Naive thymus-derived CD4-positive, alpha-beta T cell (primary cell): ENCODE measurements at regions of chr17 and their contacts with region 1.

Region 1: DNA sequence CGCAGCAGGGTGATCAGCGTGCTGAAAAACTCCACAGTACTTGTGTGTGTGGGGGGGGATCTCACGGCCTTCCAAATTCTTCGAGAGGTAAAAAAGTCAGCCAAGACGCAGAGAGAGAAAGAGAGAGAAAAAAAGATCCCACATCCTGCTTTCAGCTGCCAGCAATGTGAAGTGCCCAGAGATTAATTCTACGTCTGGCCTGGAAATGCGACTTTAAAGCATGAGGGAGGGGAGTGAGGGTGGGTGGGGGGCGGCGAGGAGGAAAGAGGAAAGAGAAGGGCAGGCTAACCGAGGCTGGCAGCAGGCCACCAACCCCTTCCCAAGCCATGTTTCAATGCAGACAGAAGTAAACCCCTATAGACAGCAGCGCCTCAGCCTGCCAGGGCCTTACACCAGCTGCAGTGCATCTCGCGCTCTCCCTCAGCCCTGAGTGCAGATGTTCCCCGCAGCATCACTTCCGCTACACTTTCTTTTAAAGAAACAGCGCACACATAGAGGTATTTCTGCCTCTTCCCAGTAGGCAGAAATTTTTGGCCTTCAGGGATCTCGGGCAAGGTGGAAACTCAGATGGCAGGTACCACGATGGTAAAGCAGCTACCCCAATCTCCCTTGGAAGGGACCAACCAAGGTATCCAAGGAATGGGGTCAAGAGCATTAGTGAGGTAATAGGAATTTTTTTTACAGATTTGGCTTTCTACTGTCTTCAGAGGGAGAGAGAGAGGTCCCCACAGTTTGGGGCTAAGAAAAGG is 87.8 kb downstream of the SMG6 start:
- DNase-seq: peak; percentile 43 to 81 (median 77)
- ATAC-seq: peak; percentile 98
- H3K4me3 ChIP-seq: peak overlapping the region; percentile 40
- H3K4me3 Mint-ChIP-seq: peak overlapping the region; percentile 74 to 89 (median 80)
- H3K27ac ChIP-seq: peak overlapping the region; percentile 89
- H3K27ac Mint-ChIP-seq: peak overlapping the region; percentile 94 to 98 (median 97)
- H3K4me1 ChIP-seq: peaks cover 34 to 53% of the 10 kb centered on the region in 2 donors
- H3K4me1 Mint-ChIP-seq: peaks cover 27 to 70% (median 64%) of the 10 kb centered on the region in 7 donors
- H3K27me3 ChIP-seq: no peaks in the 10 kb centered on the region
- H3K27me3 Mint-ChIP-seq: no peaks in the 10 kb centered on the region

Region 2: GRCh38 chr17:2090804-2091534 is 124.8 kb before region 1 on chr17:
- CTCF ChIA-PET with region 1: no interaction called
- POLR2A ChIA-PET with region 1: no interaction called
- intact Hi-C with region 1: loop called (anchors 1 kb)
- DNase-seq: no peak
- ATAC-seq: no peak
- H3K4me3 ChIP-seq: no peak overlapping the region
- H3K4me3 Mint-ChIP-seq: peak overlapping the region; percentile 91 to 99 (median 96)
- H3K27ac ChIP-seq: peak overlapping the region; percentile 69
- H3K27ac Mint-ChIP-seq: peak overlapping the region; percentile 27 to 97 (median 95)
- H3K4me1 ChIP-seq: peaks cover 28 to 30% of the 10 kb centered on the region in 2 donors
- H3K4me1 Mint-ChIP-seq: peaks cover 28 to 76% (median 53%) of the 10 kb centered on the region in 7 donors
- H3K27me3 ChIP-seq: no peaks in the 10 kb centered on the region
- H3K27me3 Mint-ChIP-seq: no peaks in the 10 kb centered on the region

Region 3: DNA sequence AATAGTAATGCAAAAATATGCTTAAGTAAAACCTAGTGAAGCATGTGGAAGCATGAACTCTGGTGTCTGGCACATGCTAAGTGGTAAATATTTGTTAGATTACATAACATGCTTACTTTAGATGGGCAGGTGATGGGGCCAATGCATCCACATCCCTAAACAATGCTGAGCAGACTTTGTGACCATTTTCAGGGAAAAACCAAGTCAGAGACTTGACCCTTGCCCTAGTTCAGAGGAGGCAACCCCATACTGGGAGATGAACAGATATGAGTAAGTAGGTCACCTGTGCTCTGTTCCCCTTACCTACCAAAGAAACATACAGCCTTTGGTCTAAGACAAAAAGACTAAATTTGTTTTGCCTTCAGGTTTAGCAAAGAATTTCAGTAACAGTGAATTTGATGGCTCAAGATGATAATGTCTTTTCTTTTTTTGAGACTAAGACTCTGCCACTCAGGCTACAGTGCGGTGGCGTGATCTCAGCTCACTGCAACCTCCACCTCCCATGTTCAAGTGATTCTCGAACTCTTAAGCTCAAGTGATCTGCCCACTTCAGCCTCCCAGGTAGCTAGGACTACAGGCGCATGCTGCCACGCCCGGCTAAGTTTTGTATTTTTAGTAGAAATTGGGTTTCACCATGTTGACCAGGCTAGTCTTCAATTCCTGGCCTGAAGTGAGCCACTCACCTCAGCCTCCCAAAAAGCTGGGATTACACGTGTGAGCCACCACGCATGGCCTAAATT is 69.5 kb before region 1 on chr17:
- CTCF ChIA-PET with region 1: no interaction called
- POLR2A ChIA-PET with region 1: no interaction called
- intact Hi-C with region 1: no loop called
- DNase-seq: no peak
- ATAC-seq: no peak
- H3K4me3 ChIP-seq: no peak overlapping the region
- H3K4me3 Mint-ChIP-seq: no peak overlapping the region
- H3K27ac ChIP-seq: no peak overlapping the region
- H3K27ac Mint-ChIP-seq: peak overlapping the region in 2 of 9 donors; percentile 25 to 66
- H3K4me1 ChIP-seq: peaks cover 0 to 4% of the 10 kb centered on the region in 2 donors
- H3K4me1 Mint-ChIP-seq: peaks cover 0 to 14% (median 3%) of the 10 kb centered on the region in 7 donors
- H3K27me3 ChIP-seq: no peaks in the 10 kb centered on the region
- H3K27me3 Mint-ChIP-seq: no peaks in the 10 kb centered on the region

Region 4: DNA sequence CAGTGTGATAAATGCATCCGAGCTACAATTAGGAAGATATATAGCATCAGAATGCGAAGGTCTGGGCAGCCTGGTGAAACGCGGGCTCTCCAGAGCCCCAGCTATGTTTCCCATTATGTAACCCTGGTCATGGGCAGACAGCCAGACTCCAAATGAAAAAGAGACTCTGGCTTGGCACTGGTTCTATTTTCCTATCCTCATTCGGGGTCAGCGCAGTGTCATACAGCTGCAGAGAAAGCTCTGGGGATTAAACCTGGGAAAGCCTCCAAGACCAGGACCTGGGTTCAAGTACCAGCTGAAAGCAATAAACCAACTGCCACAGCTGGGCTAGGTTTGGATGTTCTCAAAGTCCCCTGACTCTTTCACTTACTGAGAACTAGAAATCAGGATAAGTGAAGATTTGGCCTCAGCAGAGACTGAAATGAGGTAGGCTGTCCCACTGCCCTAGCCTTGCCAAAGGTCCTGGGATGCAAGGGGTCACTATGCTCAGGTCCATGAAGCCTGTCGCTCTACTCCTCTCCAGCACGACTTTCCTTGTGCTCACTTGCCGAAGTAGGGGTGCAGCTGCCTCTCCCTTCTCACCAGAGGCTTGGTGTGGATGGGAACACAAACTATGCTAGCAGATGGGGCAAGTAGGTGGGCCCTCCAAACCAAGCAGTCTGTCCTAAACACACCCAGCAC is 36.0 kb before region 1 on chr17:
- CTCF ChIA-PET with region 1: no interaction called
- POLR2A ChIA-PET with region 1: no interaction called
- intact Hi-C with region 1: loop called in 1 of 2 experiments (anchors 5 kb)
- DNase-seq: no peak
- ATAC-seq: no peak
- H3K4me3 ChIP-seq: no peak overlapping the region
- H3K4me3 Mint-ChIP-seq: no peak overlapping the region
- H3K27ac ChIP-seq: no peak overlapping the region
- H3K27ac Mint-ChIP-seq: peak overlapping the region in 1 of 9 donors; percentile 88
- H3K4me1 ChIP-seq: no peaks in the 10 kb centered on the region
- H3K4me1 Mint-ChIP-seq: peaks cover 0 to 59% (median 10%) of the 10 kb centered on the region in 7 donors
- H3K27me3 ChIP-seq: no peaks in the 10 kb centered on the region
- H3K27me3 Mint-ChIP-seq: no peaks in the 10 kb centered on the region

Region 5: GRCh38 chr17:2192367-2193057 is 23.3 kb before region 1 on chr17:
- CTCF ChIA-PET with region 1: interaction called, 4 read pairs
- POLR2A ChIA-PET with region 1: interaction called, 5 read pairs
- intact Hi-C with region 1: loop called in 1 of 2 experiments (anchors 1 kb)
- DNase-seq: peak in 7 of 9 donors; percentile 22 to 41 (median 31)
- ATAC-seq: peak; percentile 90
- H3K4me3 ChIP-seq: no peak overlapping the region
- H3K4me3 Mint-ChIP-seq: peak overlapping the region; percentile 30 to 80 (median 58)
- H3K27ac ChIP-seq: peak overlapping the region; percentile 27
- H3K27ac Mint-ChIP-seq: peak overlapping the region in 8 of 9 donors; percentile 22 to 86 (median 82)
- H3K4me1 ChIP-seq: peaks cover 16 to 30% of the 10 kb centered on the region in 2 donors
- H3K4me1 Mint-ChIP-seq: peaks cover 34 to 87% (median 63%) of the 10 kb centered on the region in 7 donors
- H3K27me3 ChIP-seq: no peaks in the 10 kb centered on the region
- H3K27me3 Mint-ChIP-seq: no peaks in the 10 kb centered on the region

Region 6: GRCh38 chr17:2253768-2254406 is 38.1 kb after region 1 on chr17:
- CTCF ChIA-PET with region 1: no interaction called
- POLR2A ChIA-PET with region 1: interaction called, 3 read pairs
- intact Hi-C with region 1: loop called in 1 of 2 experiments (anchors 5 kb)
- DNase-seq: peak in 6 of 9 donors; percentile 14 to 45 (median 30)
- ATAC-seq: peak; percentile 63
- H3K4me3 ChIP-seq: no peak overlapping the region
- H3K4me3 Mint-ChIP-seq: peak overlapping the region; percentile 27 to 76 (median 58)
- H3K27ac ChIP-seq: no peak overlapping the region
- H3K27ac Mint-ChIP-seq: peak overlapping the region; percentile 81 to 97 (median 93)
- H3K4me1 ChIP-seq: peaks cover 15 to 50% of the 10 kb centered on the region in 2 donors
- H3K4me1 Mint-ChIP-seq: peaks cover 29 to 79% (median 73%) of the 10 kb centered on the region in 7 donors
- H3K27me3 ChIP-seq: no peaks in the 10 kb centered on the region
- H3K27me3 Mint-ChIP-seq: no peaks in the 10 kb centered on the region